ENCODE measurements at regions of chr5 and their contacts with region 1.

Region 1: DNA sequence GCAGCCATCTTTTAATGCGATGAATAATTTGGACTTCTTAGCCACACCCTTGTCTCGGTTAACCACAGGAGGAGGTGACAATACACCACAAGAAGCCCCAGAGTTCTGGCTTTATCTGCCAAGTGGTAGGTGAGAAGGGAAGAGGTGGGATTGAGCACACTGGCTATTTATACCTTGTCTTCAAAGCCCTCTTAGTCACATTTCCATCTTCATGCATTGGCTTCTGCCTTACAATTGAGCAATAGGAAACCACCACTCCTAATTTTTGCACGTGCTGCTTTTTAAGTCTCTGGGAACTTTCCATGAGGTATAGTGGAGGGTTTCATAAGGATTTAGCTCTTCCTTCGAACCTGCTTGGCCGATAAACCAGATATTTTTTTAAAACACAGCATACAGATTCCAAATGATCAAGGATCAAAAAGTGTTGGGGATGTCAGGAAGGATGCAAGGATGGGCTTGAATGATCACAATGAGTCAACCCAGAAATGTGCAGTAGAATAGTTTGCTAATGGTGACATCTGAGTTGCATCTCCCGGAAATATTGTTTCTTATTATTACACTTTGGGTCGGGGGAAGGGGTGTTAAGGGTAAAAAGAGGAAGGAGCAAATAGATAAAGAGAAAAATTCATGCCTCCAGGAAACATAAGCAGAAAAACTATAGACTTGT is 25.5 kb downstream of the PLAC8L1 start:
- DNase-seq: no peak
- H3K4me3 ChIP-seq: no peak overlapping the region
- CTCF ChIP-seq: no peak

Region 2: DNA sequence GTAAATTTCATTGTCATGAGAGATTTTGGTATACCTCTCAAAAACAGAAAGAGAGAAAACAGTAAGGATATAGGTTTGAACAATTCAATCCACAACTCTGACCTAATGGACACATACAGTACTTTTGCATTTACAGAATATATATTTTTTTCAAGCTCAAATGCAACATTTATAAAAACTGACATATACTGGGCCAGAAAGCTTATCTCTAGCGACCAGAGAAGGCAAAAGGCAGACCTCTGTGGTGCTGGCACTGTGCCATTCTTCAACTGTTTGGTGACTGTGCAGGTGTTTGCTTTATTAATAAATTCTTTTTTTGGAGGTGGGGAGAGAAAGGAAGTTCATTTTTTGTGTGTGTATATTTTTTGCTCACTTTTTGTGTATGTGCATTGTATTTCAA is 31.6 kb after region 1 on chr5:
- in situ Hi-C with region 1: loop called (anchors 5 kb)
- DNase-seq: no peak
- H3K4me3 ChIP-seq: no peak overlapping the region
- CTCF ChIP-seq: no peak

Region 3: DNA sequence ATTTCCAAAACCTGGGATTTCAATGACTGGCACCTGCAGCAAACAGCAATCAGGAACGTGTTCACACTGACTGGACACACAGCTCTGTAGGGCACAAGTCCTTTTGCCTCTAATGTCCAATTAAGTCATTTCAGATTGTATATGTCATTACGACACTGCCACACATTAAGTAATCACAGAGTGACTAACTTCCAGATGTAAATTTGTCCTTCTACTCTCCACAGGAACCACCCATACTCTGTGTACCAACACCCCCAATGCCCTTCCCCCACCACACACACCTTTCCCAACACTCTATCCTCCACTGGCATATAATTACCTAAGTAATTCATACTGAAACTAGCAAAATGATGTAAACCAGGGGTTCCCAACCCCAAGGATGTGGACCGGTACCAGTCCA is 72.1 kb after region 1 on chr5:
- in situ Hi-C with region 1: no loop called
- DNase-seq: no peak
- H3K4me3 ChIP-seq: no peak overlapping the region
- CTCF ChIP-seq: no peak